ENCODE measurements at regions of chr7 and their contacts with region 1.

Region 1: DNA sequence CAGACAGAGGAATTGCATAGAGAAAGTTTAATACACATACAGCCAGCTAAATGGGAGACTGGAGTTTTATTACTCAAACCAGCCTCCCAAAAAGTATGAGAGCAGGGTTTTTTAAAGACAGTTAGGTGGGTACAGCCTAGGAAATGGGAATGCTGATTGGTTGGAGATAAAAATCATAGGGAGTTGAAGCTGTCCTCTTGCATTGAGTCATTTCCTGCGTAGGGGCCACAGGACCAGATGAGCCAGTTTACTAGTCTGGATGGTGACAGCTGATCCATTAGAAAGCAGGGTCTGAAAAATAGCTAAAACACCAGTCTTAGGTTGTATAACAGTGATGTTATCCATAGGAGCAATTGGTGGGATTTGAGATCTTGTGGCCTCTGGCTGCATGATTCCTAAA is 76.1 kb upstream of the POM121L12 start:
- DNase-seq: peak; percentile 25
- H3K4me3 ChIP-seq: no peak overlapping the region
- H3K27ac ChIP-seq: peak overlapping the region; percentile 32
- H3K4me1 ChIP-seq: peaks cover 39% of the 10 kb centered on the region
- H3K27me3 ChIP-seq: no peaks in the 10 kb centered on the region
- CTCF ChIP-seq: no peak
- POLR2A ChIP-seq: no peak

Region 2: GRCh38 chr7:52838981-52839411 is 120.3 kb before region 1 on chr7:
- CTCF ChIA-PET with region 1: no interaction called
- POLR2A ChIA-PET with region 1: no interaction called
- dilution Hi-C with region 1: no loop called
- intact Hi-C with region 1: loop called (anchors 1 kb)
- DNase-seq: peak; percentile 94
- H3K4me3 ChIP-seq: peak overlapping the region in 1 of 3 experiments; percentile 35
- H3K27ac ChIP-seq: peak overlapping the region; percentile 93
- H3K4me1 ChIP-seq: peaks cover 20% of the 10 kb centered on the region
- H3K27me3 ChIP-seq: no peaks in the 10 kb centered on the region
- CTCF ChIP-seq: no peak
- POLR2A ChIP-seq: no peak

Region 3: DNA sequence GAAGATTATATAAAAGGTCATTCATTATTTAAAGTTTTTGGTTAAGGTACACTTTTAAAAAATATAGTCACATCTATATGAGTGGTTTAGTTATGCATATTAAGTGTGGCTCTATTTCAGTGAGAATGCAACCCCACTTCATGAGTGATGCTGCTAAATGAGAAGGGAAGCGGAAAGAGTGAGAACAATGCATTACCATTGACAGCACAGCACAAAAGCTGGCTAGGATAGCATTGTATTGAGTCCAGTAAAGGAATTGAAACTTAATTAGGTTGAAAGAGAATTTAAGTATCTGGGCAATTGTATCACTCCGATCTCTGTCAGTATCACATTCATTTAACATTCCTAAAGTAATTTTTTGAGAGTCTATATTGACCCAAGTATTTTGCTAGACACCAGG is 89.3 kb after region 1 on chr7:
- CTCF ChIA-PET with region 1: no interaction called
- POLR2A ChIA-PET with region 1: no interaction called
- dilution Hi-C with region 1: no loop called
- intact Hi-C with region 1: no loop called
- DNase-seq: no peak
- H3K4me3 ChIP-seq: no peak overlapping the region
- H3K27ac ChIP-seq: no peak overlapping the region
- H3K4me1 ChIP-seq: no peaks in the 10 kb centered on the region
- H3K27me3 ChIP-seq: no peaks in the 10 kb centered on the region
- CTCF ChIP-seq: no peak
- POLR2A ChIP-seq: no peak

Region 4: GRCh38 chr7:53218730-53219504 is 259.6 kb after region 1 on chr7:
- CTCF ChIA-PET with region 1: no interaction called
- POLR2A ChIA-PET with region 1: no interaction called
- dilution Hi-C with region 1: no loop called
- intact Hi-C with region 1: loop called (anchors 5 kb)
- DNase-seq: peak; percentile 65
- H3K4me3 ChIP-seq: peak overlapping the region; percentile 60 to 83 (median 73)
- H3K27ac ChIP-seq: peak overlapping the region; percentile 62
- H3K4me1 ChIP-seq: no peaks in the 10 kb centered on the region
- H3K27me3 ChIP-seq: no peaks in the 10 kb centered on the region
- CTCF ChIP-seq: peak in 1 of 2 donors; percentile 7
- POLR2A ChIP-seq: no peak